Activated naive CD4-positive, alpha-beta T cell treated with anti-CD3 and anti-CD28 coated beads for 36 hours (primary cell): ENCODE measurements at regions of chr11 and their contacts with region 1.

Region 1: DNA sequence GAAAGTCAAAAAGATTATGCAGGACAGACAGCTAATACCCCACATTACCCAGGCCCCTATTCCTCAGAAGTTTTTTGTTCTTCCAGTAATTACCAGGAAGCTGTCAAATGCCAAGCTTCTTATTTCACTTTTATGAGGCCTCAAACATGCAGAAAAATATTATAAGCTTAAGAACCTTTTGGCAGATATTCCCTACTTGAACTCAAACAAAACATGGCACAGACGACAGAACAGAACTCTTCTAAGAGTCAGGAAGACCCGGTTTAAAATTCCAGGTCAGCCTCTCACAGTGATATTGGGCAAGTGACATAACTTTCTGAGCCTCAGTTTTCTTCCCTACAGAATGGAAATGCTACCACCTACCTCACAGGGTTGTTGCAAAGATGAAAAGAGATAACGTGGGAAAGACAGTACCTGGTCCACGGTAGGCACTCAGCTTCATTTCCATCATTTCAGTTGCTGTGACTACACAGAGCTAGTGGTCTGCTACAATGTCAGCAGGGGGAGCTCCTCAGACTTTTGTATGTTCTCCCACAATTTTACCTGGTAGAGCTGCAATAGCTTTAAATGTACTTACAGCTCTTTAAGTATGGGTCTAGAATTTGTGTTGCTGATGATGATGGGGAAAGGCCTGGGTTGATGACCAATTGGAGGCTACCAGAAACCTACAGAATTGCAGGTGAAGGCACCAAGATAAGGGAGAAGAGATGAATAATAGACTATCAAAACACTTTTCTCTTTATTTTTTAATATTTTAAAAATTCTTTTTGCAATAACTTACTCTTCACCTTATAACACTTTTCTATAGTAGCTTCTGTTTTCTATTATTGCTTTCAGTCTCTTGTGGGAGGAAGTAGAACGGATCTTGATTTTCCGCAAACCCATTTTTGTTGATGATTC is 98.3 kb upstream of the CHRM4 start:
- DNase-seq: peak; percentile 45
- H3K4me3 Mint-ChIP-seq: no peak overlapping the region
- H3K27ac Mint-ChIP-seq: no peak overlapping the region
- H3K4me1 Mint-ChIP-seq: no peaks in the 10 kb centered on the region
- H3K27me3 Mint-ChIP-seq: no peaks in the 10 kb centered on the region

Region 2: DNA sequence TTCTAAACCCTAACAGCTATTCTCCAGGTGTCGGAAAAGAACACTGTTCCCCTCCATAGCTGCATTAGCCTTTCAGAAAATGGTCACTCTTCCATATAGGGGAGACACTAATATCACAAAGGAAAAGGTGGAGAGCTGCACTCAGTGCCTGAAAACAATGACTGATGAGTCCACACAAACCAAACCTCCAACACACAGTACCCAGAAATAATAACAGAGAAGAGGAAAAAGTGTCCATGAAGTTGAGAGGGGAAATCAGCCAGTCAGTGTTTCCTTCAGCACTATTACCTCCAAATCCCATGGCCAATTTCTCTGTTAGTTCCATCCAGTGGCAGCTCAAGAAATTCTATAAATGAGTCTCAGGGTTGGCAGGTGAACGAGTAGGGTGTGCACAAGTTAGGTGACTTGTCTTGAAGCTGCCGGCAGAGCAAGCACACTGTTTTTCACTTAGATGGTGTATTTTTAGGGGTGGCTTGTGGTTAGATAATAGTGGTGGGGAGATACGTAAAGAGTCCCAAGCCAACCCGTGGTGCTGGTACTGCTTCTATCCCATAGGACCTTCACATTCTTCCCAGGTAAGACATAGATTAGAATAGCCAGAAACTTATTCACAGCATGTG is 13.9 kb before region 1 on chr11:
- CTCF ChIA-PET with region 1: interaction called, 22 read pairs
- intact Hi-C with region 1: no loop called
- DNase-seq: no peak
- H3K4me3 Mint-ChIP-seq: no peak overlapping the region
- H3K27ac Mint-ChIP-seq: no peak overlapping the region
- H3K4me1 Mint-ChIP-seq: peaks cover 28% of the 10 kb centered on the region
- H3K27me3 Mint-ChIP-seq: no peaks in the 10 kb centered on the region

Region 3: GRCh38 chr11:46520971-46521745 is 31.2 kb after region 1 on chr11:
- CTCF ChIA-PET with region 1: interaction called, 13 read pairs
- intact Hi-C with region 1: no loop called
- DNase-seq: no peak
- H3K4me3 Mint-ChIP-seq: no peak overlapping the region
- H3K27ac Mint-ChIP-seq: no peak overlapping the region
- H3K4me1 Mint-ChIP-seq: peaks cover 9% of the 10 kb centered on the region
- H3K27me3 Mint-ChIP-seq: no peaks in the 10 kb centered on the region

Region 4: DNA sequence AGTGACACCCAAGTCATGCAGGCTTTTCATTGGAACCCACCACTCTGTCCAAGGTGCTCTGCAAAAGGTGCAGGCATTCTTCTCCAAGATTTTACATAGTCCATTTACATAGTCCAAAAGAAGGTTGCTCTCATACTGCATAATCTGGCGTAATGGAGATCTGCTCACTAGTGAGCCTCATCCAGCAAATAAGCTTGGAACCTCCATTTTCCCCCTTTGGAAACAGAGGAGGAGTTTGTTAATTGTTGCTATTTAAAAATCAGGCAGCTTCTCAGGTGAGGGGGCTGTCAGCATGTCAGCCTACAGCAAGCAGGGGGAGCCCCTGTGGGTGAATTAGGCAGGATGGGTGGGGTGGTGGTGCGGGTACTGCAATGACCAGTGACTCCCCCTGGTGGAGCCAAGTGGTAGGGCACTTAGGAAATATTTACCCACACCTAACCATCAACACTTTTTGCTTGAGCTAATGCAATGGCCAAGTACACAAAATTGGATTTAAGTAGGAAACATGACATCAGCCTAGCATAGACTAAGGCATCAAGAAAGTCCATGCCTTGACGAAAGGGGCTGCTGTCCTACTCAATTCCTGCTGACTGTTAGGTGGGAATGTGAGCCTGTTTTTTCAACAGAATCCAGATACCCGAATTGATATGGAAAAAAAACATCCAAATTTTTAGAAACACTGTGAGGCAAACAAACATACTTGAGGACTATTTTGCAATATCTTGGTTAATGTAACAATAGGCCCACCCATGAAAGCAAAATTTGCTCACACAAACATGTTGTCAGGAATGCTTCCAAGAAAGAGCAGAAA is 39.4 kb after region 1 on chr11:
- CTCF ChIA-PET with region 1: interaction called, 11 read pairs
- intact Hi-C with region 1: loop called (anchors 1 kb)
- DNase-seq: peak; percentile 90
- H3K4me3 Mint-ChIP-seq: no peak overlapping the region
- H3K27ac Mint-ChIP-seq: no peak overlapping the region
- H3K4me1 Mint-ChIP-seq: peaks cover 33% of the 10 kb centered on the region
- H3K27me3 Mint-ChIP-seq: no peaks in the 10 kb centered on the region

Region 5: GRCh38 chr11:46537537-46538295 is 47.8 kb after region 1 on chr11:
- CTCF ChIA-PET with region 1: interaction called, 16 read pairs
- intact Hi-C with region 1: no loop called
- DNase-seq: peak; percentile 79
- H3K4me3 Mint-ChIP-seq: no peak overlapping the region
- H3K27ac Mint-ChIP-seq: no peak overlapping the region
- H3K4me1 Mint-ChIP-seq: peaks cover 21% of the 10 kb centered on the region
- H3K27me3 Mint-ChIP-seq: no peaks in the 10 kb centered on the region